ENCODE measurements at regions of chr15 and their contacts with region 1.

Region 1: GRCh38 chr15:70810916-70811578 is 42.9 kb downstream of the LARP6 start:
- DNase-seq: no peak
- ATAC-seq: peak; percentile 62
- H3K4me3 ChIP-seq: no peak overlapping the region
- H3K27ac ChIP-seq: no peak overlapping the region
- H3K4me1 ChIP-seq: peaks cover 0 to 15% of the 10 kb centered on the region in 2 experiments; a peak in 2 of 4 replicates
- H3K27me3 ChIP-seq: no peaks in the 10 kb centered on the region
- CTCF ChIP-seq: 0 out of 6 replicates have a peak, but pooled peaks of 1 of the 3 experiments have one; percentile 10
- POLR2A ChIP-seq: no peak
- RAD21 ChIP-seq: no peak

Region 2: GRCh38 chr15:70569091-70569621 is 241.9 kb before region 1 on chr15:
- CTCF ChIA-PET with region 1: interaction called, 13 read pairs
- POLR2A ChIA-PET with region 1: no interaction called
- RAD21 ChIA-PET with region 1: interaction called, 3 to 5 read pairs
- intact Hi-C with region 1: loop called (anchors 1 kb)
- DNase-seq: peak; percentile 73
- ATAC-seq: peak; percentile 89
- H3K4me3 ChIP-seq: peak overlapping the region; percentile 6 to 17; a peak in 3 of 4 replicates
- H3K27ac ChIP-seq: peak overlapping the region; percentile 56
- H3K4me1 ChIP-seq: peaks cover 20 to 25% of the 10 kb centered on the region in 2 experiments
- H3K27me3 ChIP-seq: no peaks in the 10 kb centered on the region
- CTCF ChIP-seq: peak; percentile 79 to 93 (median 87)
- POLR2A ChIP-seq: no peak
- RAD21 ChIP-seq: peak; percentile 93

Region 3: GRCh38 chr15:70679919-70680231 is 131.2 kb before region 1 on chr15:
- CTCF ChIA-PET with region 1: interaction called, 27 read pairs
- POLR2A ChIA-PET with region 1: interaction called, 3 read pairs
- RAD21 ChIA-PET with region 1: interaction called in 1 of 2 experiments, 7 read pairs
- intact Hi-C with region 1: loop called (anchors 1 kb)
- DNase-seq: no peak
- ATAC-seq: no peak
- H3K4me3 ChIP-seq: no peak overlapping the region
- H3K27ac ChIP-seq: no peak overlapping the region
- H3K4me1 ChIP-seq: no peaks in the 10 kb centered on the region
- H3K27me3 ChIP-seq: no peaks in the 10 kb centered on the region
- CTCF ChIP-seq: no peak
- POLR2A ChIP-seq: no peak
- RAD21 ChIP-seq: no peak

Region 4: GRCh38 chr15:70722266-70723121 is 88.6 kb before region 1 on chr15:
- CTCF ChIA-PET with region 1: interaction called, 24 read pairs
- POLR2A ChIA-PET with region 1: no interaction called
- RAD21 ChIA-PET with region 1: interaction called in 1 of 2 experiments, 6 read pairs
- intact Hi-C with region 1: no loop called
- DNase-seq: peak; percentile 45
- ATAC-seq: peak; percentile 52; the same call in 1 of the 2 replicates
- H3K4me3 ChIP-seq: no peak overlapping the region
- H3K27ac ChIP-seq: no peak overlapping the region
- H3K4me1 ChIP-seq: peaks cover 0 to 3% of the 10 kb centered on the region in 2 experiments; a peak in 1 of 4 replicates
- H3K27me3 ChIP-seq: no peaks in the 10 kb centered on the region
- CTCF ChIP-seq: peak; percentile 62 to 79 (median 66); a peak in 5 of 6 replicates
- POLR2A ChIP-seq: no peak
- RAD21 ChIP-seq: peak; percentile 57

Region 5: GRCh38 chr15:70741107-70741531 is 69.9 kb before region 1 on chr15:
- CTCF ChIA-PET with region 1: interaction called, 10 read pairs
- POLR2A ChIA-PET with region 1: no interaction called
- RAD21 ChIA-PET with region 1: no interaction called
- intact Hi-C with region 1: no loop called
- DNase-seq: peak; percentile 31
- ATAC-seq: peak; percentile 56
- H3K4me3 ChIP-seq: peak overlapping the region in 1 of 2 experiments; percentile 37; a peak in 1 of 4 replicates
- H3K27ac ChIP-seq: peak overlapping the region; percentile 64
- H3K4me1 ChIP-seq: peaks cover 30 to 32% of the 10 kb centered on the region in 2 experiments
- H3K27me3 ChIP-seq: no peaks in the 10 kb centered on the region
- CTCF ChIP-seq: no peak
- POLR2A ChIP-seq: no peak
- RAD21 ChIP-seq: no peak

Region 6: DNA sequence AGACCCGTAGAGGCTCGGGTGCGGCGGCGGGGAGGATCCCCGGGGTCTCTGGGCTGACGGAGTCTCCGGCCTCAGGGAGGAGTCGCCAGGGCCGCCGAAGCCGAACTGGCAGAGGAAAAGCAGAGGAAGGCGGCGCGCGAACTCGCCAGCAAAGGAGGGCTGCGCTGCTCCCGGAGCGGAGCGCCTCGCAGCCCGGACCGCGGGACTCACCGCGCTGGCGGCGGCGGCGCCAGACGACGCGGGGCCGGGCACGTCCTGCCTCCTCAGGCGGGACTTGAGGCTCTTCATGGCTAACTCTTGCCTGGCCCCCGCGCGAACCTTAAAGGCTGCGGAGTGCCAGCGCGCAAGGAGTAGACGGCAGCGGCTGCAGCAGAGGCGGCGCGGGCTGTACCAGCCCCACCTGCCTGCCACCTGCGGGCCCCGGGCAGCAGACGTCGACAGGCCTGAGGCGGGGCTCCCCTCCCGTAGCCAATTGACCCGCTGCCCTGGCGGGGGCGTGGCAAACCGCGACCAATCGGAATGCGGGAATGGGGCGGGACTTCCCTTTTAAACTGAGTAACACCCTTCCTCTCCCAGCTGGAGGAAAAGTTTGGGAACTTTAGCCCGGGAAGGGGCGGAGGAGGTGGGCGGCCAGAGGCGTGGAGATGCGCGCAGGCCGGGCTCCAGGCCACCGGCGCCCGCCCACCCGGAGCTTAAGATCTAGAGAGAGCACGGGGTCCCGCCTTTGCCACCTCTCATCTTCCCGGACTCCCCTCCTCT is 47.7 kb before region 1 on chr15 and contains the start of gene UACA:
- CTCF ChIA-PET with region 1: no interaction called
- POLR2A ChIA-PET with region 1: no interaction called
- RAD21 ChIA-PET with region 1: no interaction called
- intact Hi-C with region 1: loop called (anchors 5 kb)
- DNase-seq: peak; percentile 95
- ATAC-seq: peak; percentile 93
- H3K4me3 ChIP-seq: peak within 1 kb of the TSS; percentile 81 to 92
- H3K27ac ChIP-seq: peak within 1 kb of the TSS; percentile 88
- H3K4me1 ChIP-seq: peaks cover 14 to 25% of the 10 kb centered on the region in 2 experiments
- H3K27me3 ChIP-seq: no peaks in the 10 kb centered on the region
- CTCF ChIP-seq: no peak
- POLR2A ChIP-seq: peak; percentile 68
- RAD21 ChIP-seq: no peak
- total RNA-seq, gene UACA: 47.4 TPM

Region 7: GRCh38 chr15:70826634-70827033 is 15.6 kb after region 1 on chr15:
- CTCF ChIA-PET with region 1: interaction called, 18 read pairs
- POLR2A ChIA-PET with region 1: interaction called, 5 read pairs
- RAD21 ChIA-PET with region 1: no interaction called
- intact Hi-C with region 1: no loop called
- DNase-seq: peak; percentile 29
- ATAC-seq: peak; percentile 20; the same call in 1 of the 2 replicates
- H3K4me3 ChIP-seq: no peak overlapping the region
- H3K27ac ChIP-seq: no peak overlapping the region
- H3K4me1 ChIP-seq: peaks cover 13 to 21% of the 10 kb centered on the region in 2 experiments
- H3K27me3 ChIP-seq: no peaks in the 10 kb centered on the region
- CTCF ChIP-seq: no peak
- POLR2A ChIP-seq: no peak
- RAD21 ChIP-seq: no peak

Region 8: DNA sequence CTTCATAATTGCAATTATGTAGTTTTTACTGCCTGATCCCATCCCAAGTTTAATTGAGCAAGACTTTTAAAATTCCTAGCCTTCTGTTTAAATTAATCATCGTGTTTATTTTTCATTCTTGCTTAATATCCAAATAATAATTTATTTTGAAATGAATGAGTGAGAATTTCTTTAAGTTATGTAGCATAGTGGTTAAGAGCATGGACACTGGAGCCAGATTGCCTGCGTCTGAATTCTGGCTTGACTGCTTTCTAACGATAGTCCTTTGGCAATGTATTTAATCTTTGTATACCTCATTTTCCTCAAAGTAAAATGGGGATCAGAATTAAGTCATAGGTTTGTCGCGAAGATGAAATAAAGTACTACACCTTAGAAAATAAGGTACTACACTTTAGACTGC is 153.0 kb after region 1 on chr15:
- CTCF ChIA-PET with region 1: no interaction called
- POLR2A ChIA-PET with region 1: no interaction called
- RAD21 ChIA-PET with region 1: no interaction called
- intact Hi-C with region 1: no loop called
- DNase-seq: no peak
- ATAC-seq: no peak
- H3K4me3 ChIP-seq: no peak overlapping the region
- H3K27ac ChIP-seq: no peak overlapping the region
- H3K4me1 ChIP-seq: no peaks in the 10 kb centered on the region
- H3K27me3 ChIP-seq: no peaks in the 10 kb centered on the region
- CTCF ChIP-seq: no peak
- POLR2A ChIP-seq: no peak
- RAD21 ChIP-seq: no peak